ENCODE measurements at regions of chr15 and their contacts with region 1.

Region 1: GRCh38 chr15:90059208-90059985 is 42.9 kb downstream of the IDH2 start:
- DNase-seq: peak; percentile 90
- ATAC-seq: peak; percentile 92
- H3K4me3 Mint-ChIP-seq: peak overlapping the region; percentile 46
- H3K27ac Mint-ChIP-seq: peak overlapping the region; percentile 94
- H3K4me1 Mint-ChIP-seq: peaks cover 58% of the 10 kb centered on the region
- H3K27me3 Mint-ChIP-seq: no peaks in the 10 kb centered on the region

Region 2: GRCh38 chr15:89926158-89926557 is 133.2 kb before region 1 on chr15:
- CTCF ChIA-PET with region 1: no interaction called
- POLR2A ChIA-PET with region 1: no interaction called
- intact Hi-C with region 1: no loop called
- DNase-seq: no peak
- ATAC-seq: no peak
- H3K4me3 Mint-ChIP-seq: no peak overlapping the region
- H3K27ac Mint-ChIP-seq: no peak overlapping the region
- H3K4me1 Mint-ChIP-seq: no peaks in the 10 kb centered on the region
- H3K27me3 Mint-ChIP-seq: no peaks in the 10 kb centered on the region

Region 3: DNA sequence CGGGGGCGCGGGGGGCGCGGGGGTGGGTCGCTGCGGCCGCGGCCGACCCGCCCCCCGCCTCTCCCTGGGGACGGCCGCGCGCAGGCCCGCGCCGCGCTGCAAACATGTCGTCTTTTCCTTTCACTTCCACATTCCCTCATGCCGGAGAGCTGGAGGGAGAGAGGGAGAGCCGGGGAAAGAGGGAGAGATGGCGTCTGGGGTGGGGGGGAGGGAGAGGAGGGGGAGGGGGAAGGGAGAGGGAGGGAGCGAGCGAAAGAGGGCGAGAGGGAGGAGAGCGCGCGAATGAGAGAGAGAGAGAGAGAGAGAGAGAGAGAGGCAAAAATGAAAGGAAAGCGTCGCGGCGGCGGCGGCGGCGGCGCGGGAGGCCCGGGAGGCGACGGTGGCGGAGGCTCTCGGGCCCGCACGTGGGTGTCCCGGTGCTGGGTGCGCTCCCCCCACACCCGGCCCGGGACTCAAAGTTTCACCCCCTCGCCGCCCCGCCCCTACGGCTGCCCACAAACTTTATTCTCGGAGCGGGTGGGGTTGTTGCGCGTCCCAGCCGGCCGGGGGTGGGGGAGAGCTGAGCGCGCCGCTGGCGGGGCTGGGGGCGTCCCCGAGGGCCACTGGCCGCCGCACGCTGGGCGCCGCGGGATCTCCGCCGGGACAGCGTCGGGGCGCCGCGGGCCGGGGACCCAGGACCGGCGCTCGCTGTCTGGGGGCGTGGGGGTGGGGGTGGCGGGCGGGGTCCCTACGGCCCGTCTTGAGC is 57.5 kb before region 1 on chr15:
- CTCF ChIA-PET with region 1: interaction called, 4 read pairs
- POLR2A ChIA-PET with region 1: interaction called, 4 read pairs
- intact Hi-C with region 1: loop called in 1 of 2 experiments (anchors 1 kb)
- DNase-seq: peak; percentile 77
- ATAC-seq: peak; percentile 27
- H3K4me3 Mint-ChIP-seq: peak overlapping the region; percentile 82
- H3K27ac Mint-ChIP-seq: peak overlapping the region; percentile 88
- H3K4me1 Mint-ChIP-seq: peaks cover 61% of the 10 kb centered on the region
- H3K27me3 Mint-ChIP-seq: no peaks in the 10 kb centered on the region

Region 4: DNA sequence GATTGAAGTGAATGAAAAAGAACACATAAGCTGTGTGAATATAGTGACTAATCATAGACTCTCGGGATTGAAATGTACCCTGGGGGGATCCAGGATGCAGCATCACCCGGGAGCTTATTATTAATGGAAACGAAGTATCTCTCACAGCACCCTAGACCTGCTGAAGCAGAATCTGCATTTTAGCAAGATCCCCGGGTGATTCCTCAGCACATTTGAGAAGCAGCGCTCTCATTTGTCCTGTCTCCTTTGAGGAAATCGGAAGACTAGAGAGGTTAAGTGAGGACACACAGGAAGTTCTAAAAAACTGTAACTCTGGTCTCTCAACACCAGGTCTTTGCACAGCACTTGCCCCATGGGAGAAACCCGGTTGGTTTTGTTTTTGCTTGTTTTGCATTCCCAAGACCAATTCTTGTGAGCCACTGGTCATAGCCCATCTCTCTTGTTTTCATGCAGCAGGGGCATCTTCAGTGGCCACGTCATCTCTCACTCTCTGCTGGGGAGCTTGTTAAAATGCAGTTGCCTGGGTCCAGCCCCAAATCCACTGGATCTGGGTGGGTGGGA is 28.1 kb before region 1 on chr15:
- CTCF ChIA-PET with region 1: no interaction called
- POLR2A ChIA-PET with region 1: interaction called, 4 read pairs
- intact Hi-C with region 1: loop called in 1 of 2 experiments (anchors 1 kb)
- DNase-seq: peak; percentile 54
- ATAC-seq: peak; percentile 59
- H3K4me3 Mint-ChIP-seq: no peak overlapping the region
- H3K27ac Mint-ChIP-seq: peak overlapping the region; percentile 80
- H3K4me1 Mint-ChIP-seq: peaks cover 59% of the 10 kb centered on the region
- H3K27me3 Mint-ChIP-seq: no peaks in the 10 kb centered on the region

Region 5: DNA sequence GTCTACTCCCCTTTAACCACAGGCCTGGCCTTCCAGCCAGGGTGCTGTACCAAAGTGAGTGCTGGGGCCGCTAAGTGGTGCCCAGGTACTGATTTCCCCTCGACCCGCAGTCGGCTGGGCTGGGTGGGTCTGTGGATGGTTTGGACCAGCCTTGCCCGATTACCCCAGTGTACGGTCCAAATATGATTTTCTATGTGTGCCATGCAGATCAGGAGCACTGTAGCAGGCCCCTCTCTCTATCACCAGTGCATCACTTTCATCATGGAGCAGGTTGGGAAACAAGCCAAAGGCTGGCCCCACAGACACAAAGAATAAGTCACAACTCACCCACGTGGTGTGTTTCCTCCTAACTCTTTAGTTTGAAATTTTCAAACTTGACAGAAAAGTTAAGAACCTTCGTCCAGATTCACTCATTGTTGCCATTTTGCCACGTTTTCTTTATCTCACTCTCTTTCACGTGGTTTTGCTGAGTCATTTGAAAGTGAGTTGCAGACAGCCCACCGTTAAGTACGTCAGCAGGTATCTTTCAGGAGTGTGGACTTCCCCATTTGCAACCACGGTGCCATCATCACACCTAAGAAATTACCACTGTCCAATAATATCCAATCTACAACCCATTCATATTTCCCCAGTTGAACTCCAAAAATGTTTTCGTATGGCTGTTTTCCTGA is 21.3 kb before region 1 on chr15:
- CTCF ChIA-PET with region 1: no interaction called
- POLR2A ChIA-PET with region 1: interaction called, 4 read pairs
- intact Hi-C with region 1: loop called (anchors 1 kb)
- DNase-seq: peak; percentile 82
- ATAC-seq: peak; percentile 82
- H3K4me3 Mint-ChIP-seq: peak overlapping the region; percentile 6
- H3K27ac Mint-ChIP-seq: peak overlapping the region; percentile 95
- H3K4me1 Mint-ChIP-seq: peaks cover 79% of the 10 kb centered on the region
- H3K27me3 Mint-ChIP-seq: no peaks in the 10 kb centered on the region

Region 6: GRCh38 chr15:90086868-90087268 is 27.5 kb after region 1 on chr15:
- CTCF ChIA-PET with region 1: no interaction called
- POLR2A ChIA-PET with region 1: no interaction called
- intact Hi-C with region 1: no loop called
- DNase-seq: peak; percentile 75
- ATAC-seq: peak; percentile 79
- H3K4me3 Mint-ChIP-seq: no peak overlapping the region
- H3K27ac Mint-ChIP-seq: peak overlapping the region; percentile 75
- H3K4me1 Mint-ChIP-seq: peaks cover 6% of the 10 kb centered on the region
- H3K27me3 Mint-ChIP-seq: no peaks in the 10 kb centered on the region

Region 7: DNA sequence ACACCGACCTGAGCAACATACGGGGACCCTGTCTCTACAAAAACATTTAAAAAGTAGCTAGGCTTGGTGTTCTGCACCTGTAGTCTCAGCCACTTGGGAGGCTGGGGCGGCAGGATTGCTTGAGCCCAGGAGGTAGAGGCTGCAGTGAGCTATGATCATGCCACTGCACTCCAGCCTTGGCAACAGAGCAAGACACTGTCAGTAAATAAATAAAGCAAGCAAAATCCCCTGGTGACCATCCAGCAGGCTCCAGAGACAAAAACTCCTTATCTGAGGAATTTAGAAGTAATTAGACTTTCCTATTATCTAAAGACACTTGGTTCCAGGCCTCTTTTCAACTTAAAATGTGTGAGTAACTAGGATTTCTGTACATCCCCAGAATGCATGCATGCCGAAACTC is 263.1 kb after region 1 on chr15:
- CTCF ChIA-PET with region 1: no interaction called
- POLR2A ChIA-PET with region 1: no interaction called
- intact Hi-C with region 1: no loop called
- DNase-seq: no peak
- ATAC-seq: no peak
- H3K4me3 Mint-ChIP-seq: no peak overlapping the region
- H3K27ac Mint-ChIP-seq: no peak overlapping the region
- H3K4me1 Mint-ChIP-seq: peaks cover 6% of the 10 kb centered on the region
- H3K27me3 Mint-ChIP-seq: no peaks in the 10 kb centered on the region

Measured in activated CD4-positive, alpha-beta T cell treated with anti-CD3 and anti-CD28 coated beads for 36 hours (primary cell).